Heart left ventricle (tissue), 16 donors: ENCODE measurements at regions of chr2 and their contacts with region 1.

Region 1: GRCh38 chr2:210072922-210073509 is 70.6 kb downstream of the RPE start:
- DNase-seq: no peak
- ATAC-seq: no peak
- H3K4me3 ChIP-seq: no peak overlapping the region
- H3K27ac ChIP-seq: no peak overlapping the region
- H3K4me1 ChIP-seq: peaks cover 0 to 3% (median 0%) of the 10 kb centered on the region in 12 donors
- H3K27me3 ChIP-seq: no peaks in the 10 kb centered on the region
- CTCF ChIP-seq: peak; percentile 39 to 69 (median 56)
- POLR2A ChIP-seq: no peak

Region 2: GRCh38 chr2:209988010-209988409 is 85.0 kb before region 1 on chr2:
- intact Hi-C with region 1: loop called in 1 of 10 experiments (anchors 10 kb)
- DNase-seq: no peak
- ATAC-seq: no peak
- H3K4me3 ChIP-seq: no peak overlapping the region
- H3K27ac ChIP-seq: no peak overlapping the region
- H3K4me1 ChIP-seq: no peaks in the 10 kb centered on the region
- H3K27me3 ChIP-seq: peaks cover 0 to 8% (median 0%) of the 10 kb centered on the region in 9 donors
- CTCF ChIP-seq: no peak
- POLR2A ChIP-seq: no peak

Region 3: GRCh38 chr2:210189452-210190143 is 116.6 kb after region 1 on chr2:
- intact Hi-C with region 1: loop called in 3 of 10 experiments (anchors 5 to 10 kb)
- DNase-seq: no peak
- ATAC-seq: no peak
- H3K4me3 ChIP-seq: no peak overlapping the region
- H3K27ac ChIP-seq: no peak overlapping the region
- H3K4me1 ChIP-seq: no peaks in the 10 kb centered on the region
- H3K27me3 ChIP-seq: no peaks in the 10 kb centered on the region
- CTCF ChIP-seq: no peak
- POLR2A ChIP-seq: no peak

Region 4: GRCh38 chr2:210195101-210195852 is 122.3 kb after region 1 on chr2:
- intact Hi-C with region 1: loop called (anchors 2 to 10 kb)
- DNase-seq: no peak
- ATAC-seq: peak in 1 of 4 donors; percentile 52
- H3K4me3 ChIP-seq: peak overlapping the region in 10 of 12 donors; percentile 6 to 49 (median 36)
- H3K27ac ChIP-seq: no peak overlapping the region
- H3K4me1 ChIP-seq: peaks cover 0 to 4% (median 0%) of the 10 kb centered on the region in 12 donors
- H3K27me3 ChIP-seq: no peaks in the 10 kb centered on the region
- CTCF ChIP-seq: peak; percentile 59 to 86 (median 72)
- POLR2A ChIP-seq: no peak

Region 5: GRCh38 chr2:210611466-210611865 is 538.5 kb after region 1 on chr2:
- intact Hi-C with region 1: no loop called
- DNase-seq: no peak
- ATAC-seq: no peak
- H3K4me3 ChIP-seq: no peak overlapping the region
- H3K27ac ChIP-seq: no peak overlapping the region
- H3K4me1 ChIP-seq: no peaks in the 10 kb centered on the region
- H3K27me3 ChIP-seq: no peaks in the 10 kb centered on the region
- CTCF ChIP-seq: no peak
- POLR2A ChIP-seq: no peak